Activated CD4-positive, alpha-beta T cell treated with anti-CD3 and anti-CD28 coated beads for 36 hours (primary cell): ENCODE measurements at regions of chr9 and their contacts with region 1.

Region 1: GRCh38 chr9:110048403-110048975 is 159.5 kb downstream of the C9orf152 start:
- DNase-seq: peak; percentile 93
- ATAC-seq: peak; percentile 89
- H3K4me3 Mint-ChIP-seq: peak overlapping the region; percentile 87
- H3K27ac Mint-ChIP-seq: peak overlapping the region; percentile 75
- H3K4me1 Mint-ChIP-seq: peaks cover 36% of the 10 kb centered on the region
- H3K27me3 Mint-ChIP-seq: peaks cover 10% of the 10 kb centered on the region

Region 2: GRCh38 chr9:109953813-109954497 is 94.5 kb before region 1 on chr9:
- CTCF ChIA-PET with region 1: interaction called, 4 read pairs
- POLR2A ChIA-PET with region 1: interaction called, 11 read pairs
- intact Hi-C with region 1: no loop called
- DNase-seq: no peak
- ATAC-seq: no peak
- H3K4me3 Mint-ChIP-seq: no peak overlapping the region
- H3K27ac Mint-ChIP-seq: no peak overlapping the region
- H3K4me1 Mint-ChIP-seq: peaks cover 44% of the 10 kb centered on the region
- H3K27me3 Mint-ChIP-seq: peaks cover 5% of the 10 kb centered on the region

Region 3: DNA sequence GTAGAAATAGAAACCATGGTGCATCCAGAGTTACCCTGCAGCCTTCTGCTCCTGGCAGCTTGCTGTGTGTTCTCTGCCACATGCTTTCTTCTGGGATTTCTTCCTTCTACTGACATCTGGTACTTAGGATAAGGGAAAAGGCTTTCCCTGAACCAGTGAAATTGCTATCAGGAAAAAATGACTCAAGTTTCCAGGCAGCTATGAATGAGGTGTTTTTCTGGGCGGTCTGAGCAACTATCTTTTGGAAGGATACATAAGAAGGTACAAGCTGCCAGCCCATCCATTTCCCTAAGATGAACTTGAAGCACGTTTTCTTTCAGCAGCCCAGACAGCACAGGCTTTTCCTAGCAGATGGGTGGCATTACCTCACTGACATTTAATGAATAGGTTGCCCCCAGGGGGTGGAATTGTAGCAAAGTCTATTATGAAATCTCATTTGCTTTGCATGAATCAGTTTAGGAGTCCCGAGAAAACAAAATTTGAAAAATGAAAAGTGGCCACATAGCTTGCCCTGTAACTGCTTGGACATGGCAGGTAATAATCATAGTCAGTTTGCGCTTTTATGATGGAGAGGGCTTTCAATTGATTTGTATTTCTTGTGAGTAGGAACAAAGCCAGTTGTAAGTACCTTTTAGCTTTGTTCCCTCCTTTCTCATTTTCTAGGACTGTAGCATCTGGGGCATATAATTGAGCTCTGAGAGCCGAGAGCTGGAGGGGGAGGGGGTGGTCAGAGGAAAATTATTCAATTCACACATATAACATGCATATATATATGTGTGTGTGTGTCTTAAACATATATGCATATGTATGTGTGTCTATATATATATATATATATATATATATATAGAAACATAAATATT is 51.0 kb after region 1 on chr9:
- CTCF ChIA-PET with region 1: no interaction called
- POLR2A ChIA-PET with region 1: no interaction called
- intact Hi-C with region 1: loop called in 1 of 2 experiments (anchors 5 kb)
- DNase-seq: no peak
- ATAC-seq: no peak
- H3K4me3 Mint-ChIP-seq: no peak overlapping the region
- H3K27ac Mint-ChIP-seq: no peak overlapping the region
- H3K4me1 Mint-ChIP-seq: peaks cover 5% of the 10 kb centered on the region
- H3K27me3 Mint-ChIP-seq: no peaks in the 10 kb centered on the region